ENCODE measurements at regions of chr10 and their contacts with region 1.

Region 1: DNA sequence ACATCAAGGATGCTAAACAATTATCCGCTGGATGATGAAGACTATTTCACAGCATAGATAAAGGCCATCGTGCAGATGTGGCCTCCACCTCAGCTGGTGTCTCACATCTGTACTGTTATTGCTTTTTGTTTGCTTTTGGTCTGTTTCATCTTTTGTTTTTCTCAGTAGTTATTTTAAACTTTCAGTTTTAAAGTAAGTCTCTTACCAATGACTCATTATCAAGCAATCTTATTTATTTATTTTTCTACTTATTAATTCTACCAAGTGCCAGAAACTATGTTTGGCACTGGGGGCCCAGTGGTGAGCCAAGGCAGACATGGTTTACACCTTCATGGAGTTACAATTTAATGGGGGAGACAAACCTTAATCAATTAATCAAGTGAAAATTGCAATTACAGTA is 250.9 kb upstream of the TMEM72 start:
- DNase-seq: no peak
- H3K4me3 ChIP-seq: no peak overlapping the region
- H3K27ac ChIP-seq: no peak overlapping the region
- H3K4me1 ChIP-seq: peaks cover 2 to 11% of the 10 kb centered on the region in 2 donors
- H3K27me3 ChIP-seq: no peaks in the 10 kb centered on the region
- CTCF ChIP-seq: no peak

Region 2: DNA sequence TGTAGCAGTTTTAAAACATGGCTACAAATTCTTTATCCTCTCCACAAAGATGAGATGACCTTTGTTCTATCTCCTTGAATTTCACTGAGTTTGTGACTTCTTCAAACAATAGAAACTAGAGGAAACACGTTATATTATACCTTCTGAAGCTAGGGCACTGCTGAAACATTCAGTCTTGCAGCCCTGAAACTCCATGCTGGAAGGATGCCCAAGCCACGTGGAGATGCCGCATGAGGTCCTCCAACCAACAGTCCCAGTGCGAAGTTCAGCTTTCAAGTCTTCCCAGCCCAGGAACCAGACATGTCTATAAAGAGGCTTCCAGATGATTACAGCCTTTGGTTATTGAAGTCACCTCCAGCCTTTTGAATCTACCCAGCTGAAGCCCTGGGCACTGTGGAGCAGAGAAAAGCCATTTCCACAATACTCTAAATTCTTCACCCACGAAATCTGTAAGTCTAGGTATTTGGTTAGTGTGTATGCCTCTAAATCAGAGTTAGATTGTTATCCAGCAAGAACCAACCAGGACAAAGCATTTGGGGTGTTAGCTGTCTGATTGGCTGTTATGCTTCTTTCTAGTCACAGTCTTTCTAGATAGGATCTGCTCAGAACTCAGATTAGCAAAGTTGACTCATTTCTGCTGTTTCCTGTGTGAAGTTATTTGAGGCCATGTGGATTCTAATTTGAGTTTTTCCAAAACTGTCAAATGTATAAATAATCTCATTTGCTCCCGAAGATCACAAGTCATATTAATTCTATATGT is 64.3 kb after region 1 on chr10:
- intact Hi-C with region 1: loop called (anchors 5 kb)
- DNase-seq: no peak
- H3K4me3 ChIP-seq: no peak overlapping the region
- H3K27ac ChIP-seq: peak overlapping the region; percentile 22 to 36
- H3K4me1 ChIP-seq: peaks cover 3 to 20% of the 10 kb centered on the region in 2 donors
- H3K27me3 ChIP-seq: no peaks in the 10 kb centered on the region
- CTCF ChIP-seq: no peak